CD8-positive, alpha-beta T cell (primary cell): ENCODE measurements at regions of chr17 and their contacts with region 1.

Region 1: DNA sequence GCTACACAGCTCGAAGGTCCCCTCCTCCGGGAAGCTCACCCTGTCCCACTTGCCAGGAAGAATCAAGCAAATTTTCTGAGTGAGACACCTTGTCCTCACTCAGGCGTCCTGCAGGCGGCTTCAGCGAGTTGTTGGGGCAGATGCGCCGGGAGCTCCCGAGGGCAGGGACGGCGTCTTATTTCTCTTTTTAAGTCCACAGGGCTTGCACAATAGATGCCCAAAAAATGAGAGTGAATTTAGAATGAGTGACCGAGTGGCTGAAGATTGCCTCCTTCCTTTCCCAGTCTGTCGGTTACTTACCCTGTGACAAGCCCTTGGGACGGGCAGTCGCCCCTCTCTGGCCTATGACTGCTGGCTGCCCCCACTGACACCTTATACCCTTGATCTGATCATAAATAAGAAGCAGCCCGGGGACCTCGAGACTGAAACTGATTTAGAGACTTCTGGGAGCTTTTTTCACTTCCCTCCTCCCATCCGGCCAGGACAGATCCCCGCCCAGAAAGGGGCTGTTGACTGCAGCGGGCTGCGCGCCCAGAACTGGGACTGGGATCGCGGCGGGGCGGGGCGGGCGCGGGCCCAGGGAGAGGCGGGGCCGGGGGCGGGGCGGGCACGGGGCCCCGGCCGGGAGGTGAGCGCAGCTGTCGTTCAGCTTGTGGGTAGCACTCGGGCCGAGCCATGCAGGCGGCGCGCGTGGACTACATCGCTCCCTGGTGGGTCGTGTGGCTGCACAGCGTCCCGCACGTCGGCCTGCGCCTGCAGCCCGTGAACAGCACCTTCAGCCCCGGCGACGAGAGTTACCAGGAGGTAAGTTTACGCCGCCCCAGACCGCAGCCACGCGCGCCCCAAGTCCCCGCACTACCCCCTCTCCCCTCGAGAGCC is at the start of gene TTYH2:
- DNase-seq: peak; percentile 34 to 86 (median 70)
- ATAC-seq: peak; percentile 69
- H3K4me3 ChIP-seq: peak within 1 kb of the TSS; percentile 48 to 50
- H3K4me3 Mint-ChIP-seq: peak within 1 kb of the TSS; percentile 88
- H3K27ac ChIP-seq: peak within 1 kb of the TSS; percentile 28 to 55
- H3K27ac Mint-ChIP-seq: peak within 1 kb of the TSS; percentile 89
- H3K4me1 ChIP-seq: peaks cover 37% of the 10 kb centered on the region
- H3K4me1 Mint-ChIP-seq: peaks cover 43% of the 10 kb centered on the region
- H3K27me3 ChIP-seq: no peaks in the 10 kb centered on the region
- H3K27me3 Mint-ChIP-seq: no peaks in the 10 kb centered on the region
- CTCF ChIP-seq: no peak
- total RNA-seq, gene TTYH2: 4.6 to 5.6 TPM

Region 2: GRCh38 chr17:74104921-74105320 is 108.2 kb before region 1 on chr17:
- CTCF ChIA-PET with region 1: no interaction called
- POLR2A ChIA-PET with region 1: no interaction called
- intact Hi-C with region 1: no loop called
- DNase-seq: no peak
- ATAC-seq: no peak
- H3K4me3 ChIP-seq: no peak overlapping the region
- H3K4me3 Mint-ChIP-seq: no peak overlapping the region
- H3K27ac ChIP-seq: no peak overlapping the region
- H3K27ac Mint-ChIP-seq: no peak overlapping the region
- H3K4me1 ChIP-seq: no peaks in the 10 kb centered on the region
- H3K4me1 Mint-ChIP-seq: no peaks in the 10 kb centered on the region
- H3K27me3 ChIP-seq: no peaks in the 10 kb centered on the region
- H3K27me3 Mint-ChIP-seq: peaks cover 43% of the 10 kb centered on the region
- CTCF ChIP-seq: no peak

Region 3: DNA sequence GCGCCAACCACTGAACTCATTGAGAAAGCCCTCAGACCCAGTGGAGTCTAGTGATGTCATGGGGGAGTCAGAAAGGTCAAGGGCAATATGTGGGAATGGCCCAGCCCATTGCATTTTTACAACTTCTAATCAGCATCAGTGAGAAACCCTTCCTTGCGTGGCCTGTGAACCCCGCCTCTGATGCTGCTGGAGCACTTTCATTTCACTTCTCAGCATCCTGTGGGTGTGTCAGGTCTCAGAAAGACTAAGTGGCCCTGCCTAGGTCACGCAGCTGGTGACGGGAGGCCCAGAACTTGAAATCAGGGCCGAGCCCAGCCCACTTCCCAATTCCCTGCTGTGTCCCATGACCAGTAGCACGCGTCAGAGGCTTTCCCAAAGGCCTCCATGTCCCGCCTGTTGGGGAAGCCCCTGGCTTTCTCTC is 67.0 kb after region 1 on chr17:
- CTCF ChIA-PET with region 1: interaction called, 4 read pairs
- POLR2A ChIA-PET with region 1: interaction called, 6 read pairs
- intact Hi-C with region 1: loop called (anchors 5 kb)
- DNase-seq: peak; percentile 33 to 90 (median 62)
- ATAC-seq: peak; percentile 71
- H3K4me3 ChIP-seq: no peak overlapping the region
- H3K4me3 Mint-ChIP-seq: peak overlapping the region; percentile 31
- H3K27ac ChIP-seq: peak overlapping the region; percentile 64 to 96
- H3K27ac Mint-ChIP-seq: peak overlapping the region; percentile 81
- H3K4me1 ChIP-seq: peaks cover 53% of the 10 kb centered on the region
- H3K4me1 Mint-ChIP-seq: peaks cover 44% of the 10 kb centered on the region
- H3K27me3 ChIP-seq: no peaks in the 10 kb centered on the region
- H3K27me3 Mint-ChIP-seq: no peaks in the 10 kb centered on the region
- CTCF ChIP-seq: no peak

Region 4: DNA sequence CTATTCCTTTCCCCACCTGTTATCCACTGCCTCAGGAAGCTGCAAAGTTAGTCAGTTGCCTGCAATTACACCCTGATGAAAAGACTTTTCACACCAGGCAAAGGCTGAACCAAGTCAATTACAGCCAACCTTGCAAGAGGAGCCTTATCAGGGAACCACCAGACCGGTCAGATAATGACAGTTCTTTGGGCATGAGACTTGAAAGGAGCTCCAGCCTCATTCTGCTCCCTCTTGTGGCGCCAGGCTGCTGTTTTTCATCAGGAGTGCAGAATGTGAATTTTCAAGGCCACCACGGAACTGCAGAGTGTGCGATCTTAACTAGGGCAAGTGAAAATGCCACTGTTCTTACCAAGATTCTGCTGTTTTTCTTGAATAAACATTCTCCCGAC is 83.4 kb after region 1 on chr17:
- CTCF ChIA-PET with region 1: interaction called, 8 read pairs
- POLR2A ChIA-PET with region 1: interaction called, 4 read pairs
- intact Hi-C with region 1: loop called (anchors 1 to 5 kb)
- DNase-seq: peak in 4 of 9 experiments; percentile 34 to 59 (median 56)
- ATAC-seq: no peak
- H3K4me3 ChIP-seq: no peak overlapping the region
- H3K4me3 Mint-ChIP-seq: no peak overlapping the region
- H3K27ac ChIP-seq: no peak overlapping the region
- H3K27ac Mint-ChIP-seq: no peak overlapping the region
- H3K4me1 ChIP-seq: no peaks in the 10 kb centered on the region
- H3K4me1 Mint-ChIP-seq: peaks cover 9% of the 10 kb centered on the region
- H3K27me3 ChIP-seq: no peaks in the 10 kb centered on the region
- H3K27me3 Mint-ChIP-seq: peaks cover 3% of the 10 kb centered on the region
- CTCF ChIP-seq: no peak

Region 5: GRCh38 chr17:74354123-74354522 is 141.0 kb after region 1 on chr17:
- CTCF ChIA-PET with region 1: interaction called, 5 read pairs
- POLR2A ChIA-PET with region 1: interaction called, 3 read pairs
- intact Hi-C with region 1: loop called (anchors 1 to 2 kb)
- DNase-seq: peak; percentile 12 to 67 (median 41)
- ATAC-seq: peak; percentile 62
- H3K4me3 ChIP-seq: no peak overlapping the region
- H3K4me3 Mint-ChIP-seq: no peak overlapping the region
- H3K27ac ChIP-seq: no peak overlapping the region
- H3K27ac Mint-ChIP-seq: no peak overlapping the region
- H3K4me1 ChIP-seq: peaks cover 7% of the 10 kb centered on the region
- H3K4me1 Mint-ChIP-seq: peaks cover 10% of the 10 kb centered on the region
- H3K27me3 ChIP-seq: peaks cover 13 to 18% of the 10 kb centered on the region in 2 experiments
- H3K27me3 Mint-ChIP-seq: peaks cover 47% of the 10 kb centered on the region
- CTCF ChIP-seq: peak; percentile 54

Region 6: GRCh38 chr17:74528491-74529199 is 315.5 kb after region 1 on chr17:
- CTCF ChIA-PET with region 1: no interaction called
- POLR2A ChIA-PET with region 1: no interaction called
- intact Hi-C with region 1: loop called in 1 of 2 experiments (anchors 5 kb)
- DNase-seq: peak in 3 of 9 experiments; percentile 7 to 47 (median 19)
- ATAC-seq: no peak
- H3K4me3 ChIP-seq: no peak overlapping the region
- H3K4me3 Mint-ChIP-seq: no peak overlapping the region
- H3K27ac ChIP-seq: no peak overlapping the region
- H3K27ac Mint-ChIP-seq: no peak overlapping the region
- H3K4me1 ChIP-seq: no peaks in the 10 kb centered on the region
- H3K4me1 Mint-ChIP-seq: peaks cover 8% of the 10 kb centered on the region
- H3K27me3 ChIP-seq: peaks cover 0 to 5% of the 10 kb centered on the region in 2 experiments
- H3K27me3 Mint-ChIP-seq: peaks cover 38% of the 10 kb centered on the region
- CTCF ChIP-seq: no peak